GM13977 (cell line): ENCODE measurements at regions of chr5 and their contacts with region 1.

Region 1: GRCh38 chr5:172932313-172933017 is 26.8 kb upstream of the RPL26L1 start:
- DNase-seq: peak; percentile 80
- CTCF ChIP-seq: peak; percentile 97

Region 2: DNA sequence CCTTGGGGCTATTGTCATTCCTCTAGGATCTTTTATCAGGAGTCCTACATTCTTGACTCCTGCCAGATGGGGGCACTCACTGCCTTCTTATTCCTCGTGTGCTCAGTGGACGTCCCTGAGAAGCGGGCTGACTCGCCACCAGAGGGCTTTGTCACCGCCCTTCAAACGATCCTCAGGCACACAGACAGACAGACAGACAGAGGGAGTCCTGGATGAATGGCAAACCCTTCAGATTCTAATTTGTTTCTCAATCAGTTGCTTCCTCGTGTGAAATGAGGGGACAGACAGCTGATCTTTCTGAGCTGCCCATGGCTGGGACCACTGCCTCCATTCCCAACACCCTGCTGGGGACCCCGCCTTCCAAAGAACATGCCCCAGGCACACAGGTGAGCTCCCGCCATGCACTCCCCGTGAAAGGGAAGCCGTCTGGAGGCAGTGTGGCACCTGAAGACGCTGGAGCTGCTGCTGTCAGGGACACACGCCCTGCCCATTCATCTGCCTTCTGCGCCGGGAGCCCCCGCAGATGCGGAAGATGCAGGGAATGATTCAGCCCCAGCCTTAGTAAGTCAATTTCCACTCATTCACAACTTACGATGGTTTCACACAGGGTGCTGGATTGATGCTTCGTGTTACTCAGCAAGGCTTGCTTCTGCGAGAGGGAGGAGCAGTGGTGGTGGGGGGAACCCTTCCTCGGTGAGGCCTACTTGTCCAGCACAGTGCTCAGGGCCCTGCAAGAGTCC is 453.3 kb before region 1 on chr5:
- in situ Hi-C with region 1: loop called (anchors 25 kb)
- DNase-seq: peak; percentile 84
- CTCF ChIP-seq: peak; percentile 89

Region 3: GRCh38 chr5:172707285-172708182 is 224.9 kb before region 1 on chr5:
- in situ Hi-C with region 1: loop called (anchors 10 kb)
- DNase-seq: no peak
- CTCF ChIP-seq: peak; percentile 57